Sigmoid colon (tissue), 7 donors: ENCODE measurements at regions of chr4 and their contacts with region 1.

Region 1: GRCh38 chr4:70839589-70840093 is at the start of gene GRSF1:
- DNase-seq: peak; percentile 96
- H3K4me3 ChIP-seq: peak within 1 kb of the TSS; percentile 74 to 93 (median 82)
- H3K27ac ChIP-seq: peak within 1 kb of the TSS; percentile 90 to 98 (median 94)
- H3K4me1 ChIP-seq: peaks cover 0 to 28% (median 24%) of the 10 kb centered on the region in 4 donors
- H3K27me3 ChIP-seq: no peaks in the 10 kb centered on the region
- CTCF ChIP-seq: no peak
- EP300 ChIP-seq: no peak
- POLR2A ChIP-seq: peak; percentile 23 to 41
- total RNA-seq, gene GRSF1: 46.5 to 62.1 (median 50.8) TPM

Region 2: DNA sequence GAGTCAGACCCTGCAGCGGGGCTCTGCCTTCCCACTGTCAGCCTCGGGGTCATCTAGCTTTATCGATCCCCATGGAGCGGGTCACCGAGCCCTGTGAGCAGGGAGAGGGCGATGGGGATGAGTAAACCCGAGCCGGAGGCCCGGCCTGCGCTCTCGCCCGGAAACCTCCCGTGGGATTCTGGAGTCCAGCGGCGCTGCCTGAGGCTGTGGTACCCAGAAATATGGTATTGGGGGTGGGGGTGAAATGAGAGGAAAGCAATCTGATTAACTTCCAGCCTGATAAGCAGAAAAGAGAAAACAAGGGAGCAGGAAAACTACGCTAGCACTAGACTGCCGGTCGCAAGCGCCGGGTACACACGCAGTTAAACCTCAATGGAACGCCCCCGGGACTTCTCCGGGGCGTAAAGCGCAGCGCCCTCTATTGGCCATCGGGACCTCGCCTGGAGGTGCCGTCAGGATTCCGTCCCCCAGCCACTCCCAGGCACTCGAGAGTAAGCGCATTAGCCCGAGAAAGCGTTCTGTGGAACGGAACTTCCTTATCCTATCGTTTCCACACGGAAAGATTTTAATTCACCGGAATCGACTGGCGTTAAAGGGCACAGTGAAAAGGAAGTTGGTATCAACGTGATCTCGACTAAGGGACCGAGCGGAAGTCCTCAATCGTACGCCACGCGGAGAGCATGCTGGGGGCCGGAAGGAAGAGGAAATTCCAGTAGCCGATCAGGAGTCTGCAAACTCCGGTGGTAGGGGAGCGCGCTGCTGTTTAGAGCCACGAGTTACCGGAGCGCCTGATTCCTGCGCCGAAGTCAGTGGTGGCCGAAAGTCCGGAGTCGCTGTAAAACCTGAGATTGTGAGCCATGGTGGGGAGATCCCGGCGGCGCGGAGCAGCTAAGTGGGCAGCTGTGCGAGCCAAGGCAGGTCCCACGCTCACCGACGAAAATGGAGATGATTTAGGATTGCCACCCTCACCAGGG is 151.5 kb before region 1 on chr4 and contains the start of gene UTP3:
- intact Hi-C with region 1: loop called (anchors 2 kb)
- DNase-seq: peak; percentile 98
- H3K4me3 ChIP-seq: peak within 1 kb of the TSS; percentile 66 to 94 (median 79)
- H3K27ac ChIP-seq: peak within 1 kb of the TSS; percentile 93 to 95 (median 94)
- H3K4me1 ChIP-seq: peaks cover 0 to 35% (median 32%) of the 10 kb centered on the region in 4 donors
- H3K27me3 ChIP-seq: no peaks in the 10 kb centered on the region
- CTCF ChIP-seq: peak; percentile 78 to 95 (median 92)
- EP300 ChIP-seq: peak in 2 of 4 donors; percentile 25 to 50
- POLR2A ChIP-seq: peak; percentile 44 to 58
- total RNA-seq, gene UTP3: 15.3 to 19.7 (median 15.6) TPM

Region 3: DNA sequence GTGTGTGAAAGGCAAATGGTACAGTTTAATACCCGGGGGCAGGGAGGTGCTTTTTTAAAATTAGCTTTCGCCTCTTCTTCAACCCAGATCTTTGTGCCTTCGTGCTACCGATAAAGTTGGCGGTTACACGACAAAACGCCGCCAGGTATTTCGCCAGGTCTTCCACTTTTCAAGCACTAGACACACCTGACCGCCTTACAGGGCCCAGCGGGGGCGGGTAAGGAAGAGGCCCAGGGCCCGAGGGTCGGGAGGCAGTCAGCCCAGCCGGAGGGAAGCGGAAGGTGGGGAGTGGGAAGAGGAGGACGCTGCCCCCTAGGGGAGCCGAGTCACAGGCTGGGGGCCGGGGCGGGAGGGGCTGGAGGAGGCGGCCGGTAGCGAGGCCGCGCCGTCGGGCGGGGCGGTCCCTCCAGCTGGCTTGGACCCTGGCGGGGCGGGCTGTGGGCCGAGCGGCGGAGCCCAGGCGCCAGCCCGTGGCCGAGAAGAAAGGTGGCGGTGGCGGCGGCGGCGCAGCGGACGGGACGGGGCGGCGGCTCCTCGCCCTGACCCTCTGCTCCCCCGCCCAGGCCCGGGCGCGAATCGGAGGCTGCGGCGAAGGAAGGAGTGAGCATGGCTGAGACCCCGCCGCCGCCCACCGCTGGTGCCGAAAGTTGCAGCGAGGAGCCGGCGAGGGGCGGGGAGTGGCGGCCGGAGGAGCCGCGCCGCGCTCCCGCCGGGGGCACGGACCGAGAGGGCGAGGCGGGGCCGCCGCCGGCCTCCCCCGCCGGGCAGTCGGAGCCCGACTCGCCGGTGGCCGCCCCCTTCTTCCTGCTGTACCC is 135.1 kb before region 1 on chr4:
- intact Hi-C with region 1: loop called (anchors 5 kb)
- DNase-seq: peak; percentile 90
- H3K4me3 ChIP-seq: peak overlapping the region; percentile 66 to 91 (median 84)
- H3K27ac ChIP-seq: peak overlapping the region; percentile 92 to 98 (median 97)
- H3K4me1 ChIP-seq: peaks cover 0 to 30% (median 19%) of the 10 kb centered on the region in 4 donors
- H3K27me3 ChIP-seq: no peaks in the 10 kb centered on the region
- CTCF ChIP-seq: peak in 3 of 4 experiments; percentile 14 to 31 (median 16)
- EP300 ChIP-seq: no peak
- POLR2A ChIP-seq: no peak

Region 4: DNA sequence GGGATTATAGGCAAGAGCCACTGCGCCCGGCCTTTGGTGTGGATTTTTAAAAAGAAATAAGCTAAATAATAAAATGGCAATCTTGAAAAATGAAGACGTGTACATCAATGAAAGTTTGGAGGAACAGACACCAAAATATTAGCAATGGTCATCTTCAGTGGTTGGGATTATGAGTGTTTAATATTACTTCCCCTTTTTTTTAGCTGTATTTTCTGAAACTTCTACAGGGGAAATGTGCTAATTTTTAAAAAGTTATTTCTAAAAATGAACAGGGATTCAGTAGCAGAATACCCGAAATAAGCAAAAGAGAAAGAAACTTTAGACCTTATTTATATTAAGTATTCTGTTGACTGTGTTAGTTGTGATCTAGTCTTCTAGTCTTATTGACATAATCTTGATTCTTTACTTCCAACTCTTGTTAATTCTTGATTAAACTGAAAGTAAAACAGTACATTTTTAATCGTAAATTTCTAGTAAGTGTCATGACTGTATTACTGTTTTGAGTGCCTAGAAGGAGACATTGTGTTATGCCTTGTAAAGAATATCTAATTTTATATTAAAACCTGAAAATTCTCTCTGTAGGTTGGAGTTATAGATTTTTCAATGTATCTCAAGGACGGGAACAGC is 66.6 kb before region 1 on chr4:
- intact Hi-C with region 1: no loop called
- DNase-seq: no peak
- H3K4me3 ChIP-seq: no peak overlapping the region
- H3K27ac ChIP-seq: no peak overlapping the region
- H3K4me1 ChIP-seq: no peaks in the 10 kb centered on the region
- H3K27me3 ChIP-seq: no peaks in the 10 kb centered on the region
- CTCF ChIP-seq: no peak
- EP300 ChIP-seq: no peak
- POLR2A ChIP-seq: no peak

Region 5: GRCh38 chr4:70901984-70902576 is 62.4 kb after region 1 on chr4 and contains the start of gene MOB1B:
- intact Hi-C with region 1: loop called (anchors 2 kb)
- DNase-seq: peak; percentile 92
- H3K4me3 ChIP-seq: peak within 1 kb of the TSS; percentile 77 to 90 (median 84)
- H3K27ac ChIP-seq: peak within 1 kb of the TSS; percentile 82 to 93 (median 92)
- H3K4me1 ChIP-seq: peaks cover 0 to 15% (median 6%) of the 10 kb centered on the region in 4 donors
- H3K27me3 ChIP-seq: no peaks in the 10 kb centered on the region
- CTCF ChIP-seq: peak; percentile 4 to 34 (median 21)
- EP300 ChIP-seq: no peak
- POLR2A ChIP-seq: no peak
- total RNA-seq, gene MOB1B: 15.7 to 21.7 (median 20.0) TPM

Region 6: GRCh38 chr4:70993181-70994068 is 153.8 kb after region 1 on chr4 and contains the start of gene DCK:
- intact Hi-C with region 1: loop called (anchors 2 kb)
- DNase-seq: peak; percentile 93
- H3K4me3 ChIP-seq: peak within 1 kb of the TSS; percentile 61 to 85 (median 75)
- H3K27ac ChIP-seq: peak within 1 kb of the TSS; percentile 84 to 88 (median 86)
- H3K4me1 ChIP-seq: peaks cover 0 to 45% (median 23%) of the 10 kb centered on the region in 4 donors
- H3K27me3 ChIP-seq: no peaks in the 10 kb centered on the region
- CTCF ChIP-seq: no peak
- EP300 ChIP-seq: no peak
- POLR2A ChIP-seq: peak; percentile 57 to 70
- total RNA-seq, gene DCK: 10.0 to 18.5 (median 13.9) TPM

Region 7: GRCh38 chr4:72809208-72809607 is 1969.6 kb after region 1 on chr4:
- intact Hi-C with region 1: no loop called
- DNase-seq: no peak
- H3K4me3 ChIP-seq: no peak overlapping the region
- H3K27ac ChIP-seq: no peak overlapping the region
- H3K4me1 ChIP-seq: no peaks in the 10 kb centered on the region
- H3K27me3 ChIP-seq: no peaks in the 10 kb centered on the region
- CTCF ChIP-seq: no peak
- EP300 ChIP-seq: no peak
- POLR2A ChIP-seq: no peak